Activated CD4-positive, alpha-beta T cell treated with anti-CD3 and anti-CD28 coated beads for 36 hours (primary cell): ENCODE measurements at regions of chr4 and their contacts with region 1.

Region 1: GRCh38 chr4:25159884-25160713 is at the start of gene SEPSECS:
- DNase-seq: peak; percentile 96
- ATAC-seq: peak; percentile 90
- H3K4me3 Mint-ChIP-seq: peak within 1 kb of the TSS; percentile 85
- H3K27ac Mint-ChIP-seq: peak within 1 kb of the TSS; percentile 91
- H3K4me1 Mint-ChIP-seq: peaks cover 37% of the 10 kb centered on the region
- H3K27me3 Mint-ChIP-seq: no peaks in the 10 kb centered on the region
- total RNA-seq, gene SEPSECS: 10.4 to 15.4 TPM

Region 2: DNA sequence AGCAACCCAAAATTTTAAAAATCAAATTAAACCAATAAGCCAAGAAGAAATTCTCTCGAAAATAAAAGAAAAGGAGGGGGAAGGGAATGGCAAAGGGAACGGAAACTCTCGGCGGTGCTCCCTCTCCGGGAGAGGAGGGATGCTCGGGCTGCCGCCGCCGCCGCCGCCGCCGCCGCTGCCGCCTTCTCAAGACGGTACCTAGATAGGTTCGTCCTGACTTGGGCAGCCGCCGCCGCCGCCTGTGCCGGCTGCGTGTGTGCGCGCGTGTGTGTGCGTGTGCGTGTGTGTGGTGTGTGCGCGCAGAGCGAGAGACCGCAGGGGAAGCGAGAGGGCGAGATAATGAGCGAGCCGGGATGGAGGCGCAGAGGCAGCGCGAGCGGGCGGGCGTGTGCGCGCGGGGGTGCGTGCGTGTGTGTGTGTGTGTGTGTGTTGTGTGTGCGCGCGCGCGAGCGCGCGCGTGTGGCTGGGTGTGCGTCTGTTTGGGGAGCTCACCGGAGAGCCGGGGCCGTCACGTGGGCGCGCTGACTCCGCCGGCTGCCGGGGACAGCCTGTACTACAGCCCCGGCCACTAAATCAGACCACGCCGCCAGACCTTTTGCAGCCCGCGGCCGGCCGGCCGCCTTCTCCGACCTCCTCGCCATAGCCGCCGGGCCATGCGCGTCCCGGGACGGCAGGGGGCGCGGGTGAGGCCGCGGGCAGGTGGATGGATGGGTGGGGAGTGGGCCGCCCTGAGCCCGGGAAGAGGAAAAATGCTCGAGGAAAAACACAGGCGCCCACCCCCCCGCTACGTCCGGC is 687.4 kb before region 1 on chr4:
- CTCF ChIA-PET with region 1: no interaction called
- POLR2A ChIA-PET with region 1: no interaction called
- intact Hi-C with region 1: loop called in 1 of 2 experiments (anchors 5 kb)
- DNase-seq: peak; percentile 75
- ATAC-seq: peak; percentile 54
- H3K4me3 Mint-ChIP-seq: peak overlapping the region; percentile 79
- H3K27ac Mint-ChIP-seq: peak overlapping the region; percentile 64
- H3K4me1 Mint-ChIP-seq: peaks cover 29% of the 10 kb centered on the region
- H3K27me3 Mint-ChIP-seq: peaks cover 58% of the 10 kb centered on the region

Region 3: GRCh38 chr4:25030277-25031076 is 129.6 kb before region 1 on chr4 and contains the start of gene LGI2:
- CTCF ChIA-PET with region 1: no interaction called
- POLR2A ChIA-PET with region 1: no interaction called
- intact Hi-C with region 1: no loop called
- DNase-seq: peak; percentile 28
- ATAC-seq: peak; percentile 47
- H3K4me3 Mint-ChIP-seq: no peak within 1 kb of the TSS
- H3K27ac Mint-ChIP-seq: no peak within 1 kb of the TSS
- H3K4me1 Mint-ChIP-seq: peaks cover 4% of the 10 kb centered on the region
- H3K27me3 Mint-ChIP-seq: peaks cover 63% of the 10 kb centered on the region
- total RNA-seq, gene LGI2: not detected

Region 4: GRCh38 chr4:25180524-25181131 is 20.5 kb after region 1 on chr4:
- CTCF ChIA-PET with region 1: interaction called, 24 read pairs
- POLR2A ChIA-PET with region 1: interaction called, 5 read pairs
- intact Hi-C with region 1: loop called (anchors 2 kb)
- DNase-seq: peak; percentile 50
- ATAC-seq: peak; percentile 57
- H3K4me3 Mint-ChIP-seq: no peak overlapping the region
- H3K27ac Mint-ChIP-seq: no peak overlapping the region
- H3K4me1 Mint-ChIP-seq: peaks cover 33% of the 10 kb centered on the region
- H3K27me3 Mint-ChIP-seq: no peaks in the 10 kb centered on the region

Region 5: DNA sequence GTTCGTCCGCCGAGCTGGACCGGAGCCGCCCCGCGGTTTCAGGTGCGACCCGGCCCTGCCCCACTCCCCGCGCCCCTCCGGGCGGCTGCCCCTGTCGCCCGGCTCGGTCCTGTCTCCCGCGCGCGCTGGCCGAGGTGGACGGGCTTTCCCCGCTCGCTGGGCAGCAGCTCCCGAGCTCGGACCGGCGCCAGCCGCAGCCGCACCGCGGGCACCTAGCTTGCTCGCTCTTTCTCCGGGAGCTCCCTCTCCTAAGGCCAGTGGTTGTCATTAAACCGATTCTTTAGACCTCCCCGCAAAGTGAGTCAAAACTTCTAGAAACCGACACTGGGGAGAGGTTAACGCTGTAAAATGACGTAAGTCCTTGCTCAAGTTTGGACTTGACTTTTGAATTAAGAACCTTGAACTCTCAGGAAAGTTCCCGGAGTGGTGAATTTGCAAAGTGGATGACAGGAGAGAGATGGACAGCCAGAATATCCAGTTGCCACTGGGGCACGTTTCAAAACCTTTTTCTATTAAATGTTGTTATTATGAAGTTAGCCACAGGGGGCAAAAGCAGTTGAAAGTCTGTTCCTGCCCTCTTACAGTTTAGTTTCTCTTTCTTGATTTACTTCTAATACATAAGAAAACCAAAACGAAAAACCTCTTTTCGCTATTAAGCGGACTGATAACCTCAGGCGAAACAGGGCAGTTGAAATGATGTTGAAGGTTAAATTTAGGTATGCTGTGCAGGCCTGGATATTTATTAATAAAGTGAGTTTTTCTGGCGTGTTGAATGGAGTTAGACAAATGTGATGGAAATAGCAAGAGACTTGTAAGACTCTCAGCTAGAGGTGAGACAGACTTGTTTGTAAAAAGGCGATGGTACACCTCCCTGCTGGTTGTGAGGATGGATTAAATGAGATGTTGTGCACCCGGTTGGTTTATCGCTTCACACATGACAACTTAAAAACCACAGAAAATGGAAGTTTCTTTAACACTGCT is 74.6 kb after region 1 on chr4:
- CTCF ChIA-PET with region 1: interaction called, 14 read pairs
- POLR2A ChIA-PET with region 1: interaction called, 7 read pairs
- intact Hi-C with region 1: loop called (anchors 1 kb)
- DNase-seq: peak; percentile 58
- ATAC-seq: peak; percentile 62
- H3K4me3 Mint-ChIP-seq: peak overlapping the region; percentile 91
- H3K27ac Mint-ChIP-seq: peak overlapping the region; percentile 97
- H3K4me1 Mint-ChIP-seq: peaks cover 45% of the 10 kb centered on the region
- H3K27me3 Mint-ChIP-seq: no peaks in the 10 kb centered on the region

Region 6: GRCh38 chr4:25320773-25321172 is 160.7 kb after region 1 on chr4:
- CTCF ChIA-PET with region 1: interaction called, 3 read pairs
- POLR2A ChIA-PET with region 1: interaction called, 4 read pairs
- intact Hi-C with region 1: loop called in 1 of 2 experiments (anchors 2 kb)
- DNase-seq: no peak
- ATAC-seq: peak; percentile 93
- H3K4me3 Mint-ChIP-seq: peak overlapping the region; percentile 16
- H3K27ac Mint-ChIP-seq: peak overlapping the region; percentile 89
- H3K4me1 Mint-ChIP-seq: peaks cover 37% of the 10 kb centered on the region
- H3K27me3 Mint-ChIP-seq: no peaks in the 10 kb centered on the region

Region 7: GRCh38 chr4:25367004-25367621 is 207.0 kb after region 1 on chr4:
- CTCF ChIA-PET with region 1: interaction called, 19 read pairs
- POLR2A ChIA-PET with region 1: no interaction called
- intact Hi-C with region 1: no loop called
- DNase-seq: no peak
- ATAC-seq: no peak
- H3K4me3 Mint-ChIP-seq: no peak overlapping the region
- H3K27ac Mint-ChIP-seq: no peak overlapping the region
- H3K4me1 Mint-ChIP-seq: no peaks in the 10 kb centered on the region
- H3K27me3 Mint-ChIP-seq: no peaks in the 10 kb centered on the region

Region 8: DNA sequence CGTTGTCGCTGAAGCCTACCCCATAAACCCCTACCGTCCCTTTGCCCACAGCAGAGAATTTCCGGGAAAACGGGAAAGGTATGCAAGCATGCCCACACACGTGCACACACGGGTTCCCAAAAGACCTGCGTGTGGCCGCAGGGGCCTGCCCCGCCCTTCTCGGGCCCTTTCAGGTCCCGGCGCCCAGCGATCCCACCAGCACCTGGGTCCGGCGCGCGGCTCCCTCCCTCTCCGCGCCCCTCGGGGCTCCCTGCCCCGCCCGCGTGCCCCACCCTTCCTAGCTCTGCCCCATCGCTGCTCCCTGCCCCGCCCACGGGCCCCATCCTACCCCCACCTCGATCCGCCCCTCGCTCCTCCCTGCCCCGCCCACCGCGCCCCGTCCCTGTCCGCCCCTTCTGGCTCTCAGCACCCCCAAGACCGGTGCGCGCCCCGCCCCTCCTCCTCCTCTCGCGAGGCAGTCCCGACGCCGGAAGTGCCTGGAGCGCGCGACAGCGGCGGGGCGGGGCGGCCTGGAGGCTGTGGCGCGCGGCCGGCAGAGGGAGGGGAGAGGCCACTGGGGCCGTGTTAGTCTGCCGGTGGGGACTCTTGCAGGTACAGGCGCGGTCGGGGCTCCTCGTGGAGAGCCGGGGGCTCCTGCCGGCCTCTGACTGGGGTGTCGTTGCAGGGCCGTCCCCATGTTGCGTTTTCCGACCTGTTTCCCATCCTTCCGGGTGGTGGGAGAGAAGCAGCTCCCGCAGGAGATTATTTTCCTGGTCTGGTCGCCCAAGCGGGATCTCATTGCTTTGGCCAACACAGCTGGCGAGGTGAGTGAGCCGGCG is 216.9 kb after region 1 on chr4 and contains the start of gene ANAPC4:
- CTCF ChIA-PET with region 1: interaction called, 4 read pairs
- POLR2A ChIA-PET with region 1: no interaction called
- intact Hi-C with region 1: loop called (anchors 1 to 2 kb)
- DNase-seq: peak; percentile 99
- ATAC-seq: peak; percentile 98
- H3K4me3 Mint-ChIP-seq: no peak within 1 kb of the TSS
- H3K27ac Mint-ChIP-seq: peak within 1 kb of the TSS; percentile 74
- H3K4me1 Mint-ChIP-seq: peaks cover 8% of the 10 kb centered on the region
- H3K27me3 Mint-ChIP-seq: no peaks in the 10 kb centered on the region
- total RNA-seq, gene ANAPC4: 19.2 to 31.2 TPM